ENCODE measurements at regions of chr3 and their contacts with region 1.

Region 1: GRCh38 chr3:37765591-37766488 is 95.8 kb upstream of the CTDSPL start:
- DNase-seq: no peak

Region 2: DNA sequence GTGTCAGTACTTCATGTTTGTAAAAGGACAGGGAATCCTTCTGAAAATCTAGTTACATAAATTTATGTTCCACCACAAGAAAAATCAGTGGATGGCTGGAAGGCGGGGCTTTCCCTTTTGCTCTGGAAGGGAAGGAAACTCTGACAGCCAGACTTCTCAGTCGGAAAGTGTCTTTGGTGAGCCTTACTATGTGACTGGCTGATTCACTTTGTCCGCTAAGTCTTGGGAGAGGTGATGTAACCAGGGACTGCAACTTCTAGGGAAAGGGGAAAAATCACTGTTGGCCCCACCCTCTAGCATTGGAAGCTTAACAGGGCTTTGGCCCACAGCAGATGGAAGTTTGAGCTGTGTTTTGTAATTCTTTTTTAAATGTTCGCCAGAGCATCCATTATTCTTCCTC is 185.6 kb before region 1 on chr3:
- intact Hi-C with region 1: no loop called
- DNase-seq: no peak

Region 3: DNA sequence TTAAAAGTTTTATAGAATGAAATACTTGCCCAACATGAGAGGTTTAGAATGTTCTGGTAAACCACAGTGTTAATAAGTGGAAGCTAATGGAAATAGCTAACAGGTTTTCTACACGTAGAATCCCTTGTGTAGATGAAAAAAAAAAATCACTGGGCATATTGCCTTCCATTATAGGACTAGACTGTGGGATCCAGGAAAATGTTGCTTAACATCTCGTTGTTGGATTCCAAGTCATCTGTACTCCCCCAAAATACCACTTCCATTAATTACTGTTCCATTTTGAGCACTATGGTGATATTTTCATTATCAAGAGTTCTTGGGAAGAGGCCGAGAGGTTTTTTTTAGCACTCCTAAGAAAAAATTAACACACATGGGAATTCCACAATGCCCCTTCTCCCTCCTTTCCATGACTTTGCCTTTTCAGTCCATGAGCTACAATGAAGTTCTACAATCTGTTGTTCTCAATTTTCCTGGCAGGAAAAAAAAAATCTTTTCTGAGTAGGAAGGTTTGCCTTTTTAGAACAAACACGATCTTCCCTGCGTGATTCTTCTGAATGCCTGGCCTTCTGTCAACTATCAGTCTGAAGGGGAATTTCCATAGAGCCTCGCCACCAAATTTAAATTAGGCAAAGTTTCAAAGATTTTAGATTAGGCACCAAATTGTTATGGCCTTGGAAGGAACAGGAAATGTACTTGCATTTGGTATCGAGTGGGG is 21.5 kb after region 1 on chr3:
- intact Hi-C with region 1: loop called in 1 of 2 experiments (anchors 2 kb)
- DNase-seq: no peak